Caco-2 (cell line): ENCODE measurements at regions of chr3 and their contacts with region 1.

Region 1: GRCh38 chr3:131735116-131735515 is 232.3 kb upstream of the MRPL3 start:
- DNase-seq: no peak
- H3K4me3 ChIP-seq: no peak overlapping the region
- H3K4me3 Mint-ChIP-seq: no peak overlapping the region
- H3K27ac Mint-ChIP-seq: no peak overlapping the region
- H3K4me1 ChIP-seq: no peaks in the 10 kb centered on the region
- H3K4me1 Mint-ChIP-seq: no peaks in the 10 kb centered on the region
- H3K27me3 ChIP-seq: no peaks in the 10 kb centered on the region; the same call in 1 of the 2 replicates
- H3K27me3 Mint-ChIP-seq: peaks cover 7% of the 10 kb centered on the region
- CTCF ChIP-seq: no peak

Region 2: GRCh38 chr3:131716007-131716406 is 19.1 kb before region 1 on chr3:
- CTCF ChIA-PET with region 1: no interaction called
- POLR2A ChIA-PET with region 1: interaction called, 10 read pairs
- intact Hi-C with region 1: no loop called
- DNase-seq: no peak
- H3K4me3 ChIP-seq: no peak overlapping the region
- H3K4me3 Mint-ChIP-seq: no peak overlapping the region
- H3K27ac Mint-ChIP-seq: no peak overlapping the region
- H3K4me1 ChIP-seq: no peaks in the 10 kb centered on the region
- H3K4me1 Mint-ChIP-seq: no peaks in the 10 kb centered on the region
- H3K27me3 ChIP-seq: no peaks in the 10 kb centered on the region
- H3K27me3 Mint-ChIP-seq: peaks cover 22% of the 10 kb centered on the region
- CTCF ChIP-seq: no peak